ENCODE measurements at regions of chrX and their contacts with region 1.

Region 1: GRCh38 chrX:5068550-5068949 is 1160.1 kb downstream of the NLGN4X start:
- DNase-seq: no peak
- H3K4me3 ChIP-seq: no peak overlapping the region
- H3K27ac ChIP-seq: no peak overlapping the region
- H3K4me1 ChIP-seq: no peaks in the 10 kb centered on the region
- H3K27me3 ChIP-seq: no peaks in the 10 kb centered on the region
- CTCF ChIP-seq: no peak
- POLR2A ChIP-seq: no peak

Region 2: GRCh38 chrX:5015451-5015850 is 53.1 kb before region 1 on chrX:
- intact Hi-C with region 1: loop called (anchors 2 kb)
- DNase-seq: no peak
- H3K4me3 ChIP-seq: no peak overlapping the region
- H3K27ac ChIP-seq: no peak overlapping the region
- H3K4me1 ChIP-seq: no peaks in the 10 kb centered on the region
- H3K27me3 ChIP-seq: no peaks in the 10 kb centered on the region
- CTCF ChIP-seq: no peak
- POLR2A ChIP-seq: no peak

Region 3: GRCh38 chrX:5042563-5042962 is 26.0 kb before region 1 on chrX:
- intact Hi-C with region 1: no loop called
- DNase-seq: no peak
- H3K4me3 ChIP-seq: no peak overlapping the region
- H3K27ac ChIP-seq: no peak overlapping the region
- H3K4me1 ChIP-seq: no peaks in the 10 kb centered on the region
- H3K27me3 ChIP-seq: no peaks in the 10 kb centered on the region
- CTCF ChIP-seq: no peak
- POLR2A ChIP-seq: no peak

Region 4: GRCh38 chrX:5100004-5100403 is 31.5 kb after region 1 on chrX:
- intact Hi-C with region 1: no loop called
- DNase-seq: no peak
- H3K4me3 ChIP-seq: no peak overlapping the region
- H3K27ac ChIP-seq: no peak overlapping the region
- H3K4me1 ChIP-seq: no peaks in the 10 kb centered on the region
- H3K27me3 ChIP-seq: no peaks in the 10 kb centered on the region
- CTCF ChIP-seq: no peak
- POLR2A ChIP-seq: no peak

Measured in breast epithelium (tissue), 4 donors.